ENCODE measurements at regions of chr5 and their contacts with region 1.

Region 1: DNA sequence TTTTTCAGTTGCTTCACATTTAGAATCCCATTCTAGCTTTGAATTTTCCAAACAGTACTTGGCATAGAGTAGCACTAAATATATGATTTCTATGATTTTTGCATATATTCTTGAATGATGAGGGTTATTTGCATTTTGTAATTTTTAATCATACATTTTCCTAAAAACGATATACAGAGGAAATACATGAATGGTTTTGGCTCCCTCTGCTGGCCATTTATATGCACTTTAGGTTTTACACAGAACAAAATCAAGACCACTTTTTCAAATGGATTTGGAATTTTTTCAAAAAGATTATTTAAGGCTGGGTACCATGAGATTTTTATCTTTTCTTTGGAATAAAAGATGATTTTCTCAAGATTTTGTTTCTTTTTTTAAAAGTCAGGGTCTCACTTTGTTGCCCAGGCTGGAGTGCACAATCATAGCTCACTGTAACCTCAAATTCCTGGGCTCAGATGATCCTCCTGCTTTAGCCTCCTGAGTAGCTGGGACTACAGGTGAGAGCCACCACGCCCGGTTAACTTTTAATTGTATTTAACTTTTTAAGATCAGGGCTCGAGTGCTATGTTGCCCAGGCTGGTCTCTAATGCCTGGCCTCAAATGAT is 16.7 kb upstream of the COMMD10 start:
- DNase-seq: no peak
- ATAC-seq: peak; percentile 55

Region 2: GRCh38 chr5:115634343-115635132 is 433.6 kb before region 1 on chr5:
- intact Hi-C with region 1: loop called (anchors 2 kb)
- DNase-seq: peak; percentile 92
- ATAC-seq: peak; percentile 98

Region 3: GRCh38 chr5:115888027-115888426 is 180.1 kb before region 1 on chr5:
- intact Hi-C with region 1: loop called (anchors 10 kb)
- DNase-seq: no peak
- ATAC-seq: no peak

Measured in Right ventricle myocardium superior (tissue), 1 donor.